PC-9 (cell line): ENCODE measurements at regions of chr6 and their contacts with region 1.

Region 1: GRCh38 chr6:157148391-157149323 is 174.7 kb downstream of the TMEM242 start:
- DNase-seq: peak; percentile 51 to 76
- H3K4me3 ChIP-seq: no peak overlapping the region
- H3K27ac ChIP-seq: no peak overlapping the region
- H3K4me1 ChIP-seq: no peaks in the 10 kb centered on the region
- H3K27me3 ChIP-seq: no peaks in the 10 kb centered on the region
- CTCF ChIP-seq: no peak

Region 2: GRCh38 chr6:157068691-157069324 is 79.8 kb before region 1 on chr6:
- CTCF ChIA-PET with region 1: no interaction called
- POLR2A ChIA-PET with region 1: no interaction called
- intact Hi-C with region 1: loop called (anchors 10 kb)
- DNase-seq: peak in 1 of 2 experiments; percentile 64
- H3K4me3 ChIP-seq: no peak overlapping the region
- H3K27ac ChIP-seq: peak overlapping the region; percentile 27; the same call in 1 of the 2 replicates
- H3K4me1 ChIP-seq: peaks cover 29% of the 10 kb centered on the region
- H3K27me3 ChIP-seq: no peaks in the 10 kb centered on the region
- CTCF ChIP-seq: no peak

Region 3: DNA sequence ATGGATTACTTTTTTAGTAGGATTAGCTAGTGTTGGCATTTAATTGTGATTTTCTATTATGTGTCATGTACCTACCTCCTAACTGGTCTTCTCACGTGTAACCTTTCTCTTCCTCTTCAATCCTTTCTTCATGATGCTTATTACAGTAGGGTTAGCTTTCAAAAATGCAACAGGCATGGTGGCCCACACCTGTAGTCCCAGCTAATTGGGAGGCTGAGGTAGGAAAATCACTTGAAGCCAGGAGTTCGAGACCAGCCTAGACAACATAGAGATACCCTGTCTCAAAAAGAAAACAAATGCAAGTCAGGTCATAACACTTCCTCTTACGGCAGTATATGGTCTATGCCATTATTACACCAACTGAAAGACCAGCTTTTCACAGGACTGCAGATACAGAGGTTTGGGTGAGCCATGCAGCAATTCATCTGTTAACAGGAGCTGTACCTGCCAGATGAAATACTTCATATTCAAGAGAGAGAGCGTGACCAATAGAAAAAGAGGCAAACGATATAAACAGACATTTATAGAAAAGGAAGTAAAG is 20.4 kb before region 1 on chr6:
- CTCF ChIA-PET with region 1: no interaction called
- POLR2A ChIA-PET with region 1: no interaction called
- intact Hi-C with region 1: loop called (anchors 1 kb)
- DNase-seq: no peak
- H3K4me3 ChIP-seq: no peak overlapping the region
- H3K27ac ChIP-seq: no peak overlapping the region
- H3K4me1 ChIP-seq: peaks cover 23% of the 10 kb centered on the region
- H3K27me3 ChIP-seq: no peaks in the 10 kb centered on the region
- CTCF ChIP-seq: no peak